AG04450 (cell line): ENCODE measurements at regions of chr17 and their contacts with region 1.

Region 1: GRCh38 chr17:35747540-35748017 is 5.5 kb downstream of the GAS2L2 start:
- DNase-seq: peak; percentile 55
- H3K4me3 ChIP-seq: no peak overlapping the region
- H3K27ac ChIP-seq: no peak overlapping the region
- H3K27me3 ChIP-seq: peaks cover 53% of the 10 kb centered on the region
- CTCF ChIP-seq: peak; percentile 83

Region 2: GRCh38 chr17:35587074-35587971 is 160.3 kb before region 1 on chr17 and contains the start of gene AP2B1:
- CTCF ChIA-PET with region 1: interaction called, 21 read pairs
- POLR2A ChIA-PET with region 1: no interaction called
- DNase-seq: peak; percentile 92
- H3K4me3 ChIP-seq: peak within 1 kb of the TSS; percentile 99
- H3K27ac ChIP-seq: peak within 1 kb of the TSS; percentile 97
- H3K27me3 ChIP-seq: peaks cover 2% of the 10 kb centered on the region
- CTCF ChIP-seq: no peak
- polyA plus RNA-seq, gene AP2B1: 234 and 258 TPM in 2 replicates

Region 3: GRCh38 chr17:35621768-35622167 is 125.8 kb before region 1 on chr17:
- CTCF ChIA-PET with region 1: interaction called, 357 read pairs
- POLR2A ChIA-PET with region 1: no interaction called
- DNase-seq: no peak
- H3K4me3 ChIP-seq: no peak overlapping the region
- H3K27ac ChIP-seq: no peak overlapping the region
- H3K27me3 ChIP-seq: no peaks in the 10 kb centered on the region
- CTCF ChIP-seq: no peak

Region 4: DNA sequence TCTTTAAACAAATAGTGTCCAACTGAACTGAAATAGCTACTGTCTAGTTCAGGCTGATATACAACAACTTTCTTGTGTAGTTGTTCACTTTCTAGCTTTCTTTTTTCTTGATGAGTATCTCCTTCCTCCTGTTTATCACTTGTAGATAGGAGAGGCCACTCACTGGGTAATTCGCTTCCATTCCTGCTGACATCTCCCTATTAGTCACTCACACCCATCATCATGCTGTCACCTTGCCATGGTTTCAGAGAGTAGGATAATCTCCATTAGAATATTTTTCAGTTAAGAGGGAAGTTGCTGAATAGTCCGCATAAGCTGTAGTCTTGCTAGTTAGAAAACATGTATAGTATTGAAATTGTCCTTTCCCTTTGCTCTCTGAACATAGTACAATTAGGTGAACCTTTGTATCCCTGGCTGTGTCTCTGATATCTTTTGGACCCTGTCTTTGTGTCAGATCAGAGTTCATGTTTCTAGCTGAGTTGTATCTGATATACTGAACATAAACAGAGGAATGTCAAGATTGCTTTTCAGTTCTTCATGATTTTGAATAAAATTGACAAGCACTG is 80.5 kb before region 1 on chr17:
- CTCF ChIA-PET with region 1: interaction called, 12 read pairs
- POLR2A ChIA-PET with region 1: no interaction called
- DNase-seq: no peak
- H3K4me3 ChIP-seq: no peak overlapping the region
- H3K27ac ChIP-seq: no peak overlapping the region
- H3K27me3 ChIP-seq: no peaks in the 10 kb centered on the region
- CTCF ChIP-seq: no peak

Region 5: DNA sequence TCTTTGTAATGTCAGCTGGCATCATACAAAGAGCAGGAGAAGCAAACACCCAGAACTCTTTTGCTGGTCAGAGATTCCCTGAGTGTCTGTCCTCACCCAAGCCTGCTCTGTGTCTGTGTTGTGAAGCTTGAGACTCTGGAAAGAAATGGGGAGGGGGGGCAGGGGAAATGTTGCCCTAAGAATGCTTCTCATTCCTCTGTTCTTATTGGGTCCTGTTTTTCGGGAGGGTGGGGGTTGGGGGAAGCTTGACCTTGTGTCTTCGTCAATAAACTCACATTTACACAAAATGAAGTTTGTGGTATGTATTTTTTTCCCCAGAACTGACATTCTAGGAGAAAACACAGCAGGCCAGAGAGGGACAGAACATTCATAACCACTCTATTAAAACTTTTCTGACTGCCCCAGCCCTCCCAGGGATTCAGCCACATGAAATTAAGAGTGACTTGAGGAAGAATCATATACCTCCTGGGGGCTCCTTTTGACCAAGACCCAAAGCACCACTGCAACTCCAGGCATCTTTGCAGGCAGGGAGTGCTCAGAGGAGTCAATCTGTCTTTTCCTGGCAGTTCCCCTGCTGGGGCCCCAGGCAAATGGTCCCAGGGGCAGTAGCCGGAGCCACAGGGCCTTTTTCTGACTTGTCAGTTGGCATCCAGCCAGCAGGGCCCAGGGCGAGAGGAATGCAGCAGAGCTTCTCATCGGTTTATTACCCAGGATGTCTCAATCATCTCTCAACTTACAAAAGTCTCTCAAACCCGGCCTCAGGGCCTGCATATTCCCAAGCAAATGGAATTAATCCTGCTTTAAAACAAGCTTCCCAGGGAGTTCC is 21.2 kb before region 1 on chr17:
- CTCF ChIA-PET with region 1: interaction called, 21 read pairs
- POLR2A ChIA-PET with region 1: interaction called, 3 read pairs
- DNase-seq: peak; percentile 72
- H3K4me3 ChIP-seq: no peak overlapping the region
- H3K27ac ChIP-seq: peak overlapping the region; percentile 70
- H3K27me3 ChIP-seq: no peaks in the 10 kb centered on the region
- CTCF ChIP-seq: no peak

Region 6: DNA sequence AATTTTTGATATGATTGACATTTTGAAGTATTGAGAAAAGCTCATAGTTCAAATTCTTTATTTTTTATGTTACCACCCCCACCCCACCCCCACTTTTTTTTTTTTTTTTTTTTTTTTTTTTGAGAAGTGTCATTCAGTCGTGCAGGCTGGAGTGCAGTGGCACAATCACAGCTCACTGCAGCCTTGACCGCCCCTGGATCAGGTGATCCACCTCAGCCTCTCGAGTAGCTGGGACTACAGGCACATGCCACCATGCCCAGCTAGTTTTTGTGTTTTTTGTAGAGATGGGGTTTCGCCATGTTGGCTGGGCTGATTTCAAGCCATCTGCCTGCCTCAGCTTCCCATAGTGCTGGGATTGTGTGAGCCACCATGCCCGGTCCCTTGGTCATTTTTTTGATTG is 69.1 kb after region 1 on chr17:
- CTCF ChIA-PET with region 1: interaction called, 12 read pairs
- POLR2A ChIA-PET with region 1: no interaction called
- DNase-seq: no peak
- H3K4me3 ChIP-seq: no peak overlapping the region
- H3K27ac ChIP-seq: no peak overlapping the region
- H3K27me3 ChIP-seq: no peaks in the 10 kb centered on the region
- CTCF ChIP-seq: no peak

Region 7: GRCh38 chr17:35889818-35890763 is 142.5 kb after region 1 on chr17:
- CTCF ChIA-PET with region 1: no interaction called
- POLR2A ChIA-PET with region 1: no interaction called
- DNase-seq: no peak
- H3K4me3 ChIP-seq: no peak overlapping the region
- H3K27ac ChIP-seq: no peak overlapping the region
- H3K27me3 ChIP-seq: no peaks in the 10 kb centered on the region
- CTCF ChIP-seq: no peak